CD8-positive, alpha-beta memory T cell (primary cell): ENCODE measurements at regions of chr10 and their contacts with region 1.

Region 1: GRCh38 chr10:97037365-97038361 is 148.1 kb downstream of the SLIT1 start:
- DNase-seq: peak; percentile 42 to 75 (median 50)
- H3K4me3 ChIP-seq: peak overlapping the region; percentile 68
- H3K4me3 Mint-ChIP-seq: peak overlapping the region; percentile 38 to 88 (median 77)
- H3K27ac ChIP-seq: no peak overlapping the region
- H3K27ac Mint-ChIP-seq: peak overlapping the region in 4 of 8 donors; percentile 32 to 90 (median 63)
- H3K4me1 ChIP-seq: no peaks in the 10 kb centered on the region
- H3K4me1 Mint-ChIP-seq: peaks cover 7 to 17% (median 10%) of the 10 kb centered on the region in 3 donors
- H3K27me3 ChIP-seq: no peaks in the 10 kb centered on the region
- H3K27me3 Mint-ChIP-seq: peaks cover 6 to 14% of the 10 kb centered on the region in 2 donors

Region 2: DNA sequence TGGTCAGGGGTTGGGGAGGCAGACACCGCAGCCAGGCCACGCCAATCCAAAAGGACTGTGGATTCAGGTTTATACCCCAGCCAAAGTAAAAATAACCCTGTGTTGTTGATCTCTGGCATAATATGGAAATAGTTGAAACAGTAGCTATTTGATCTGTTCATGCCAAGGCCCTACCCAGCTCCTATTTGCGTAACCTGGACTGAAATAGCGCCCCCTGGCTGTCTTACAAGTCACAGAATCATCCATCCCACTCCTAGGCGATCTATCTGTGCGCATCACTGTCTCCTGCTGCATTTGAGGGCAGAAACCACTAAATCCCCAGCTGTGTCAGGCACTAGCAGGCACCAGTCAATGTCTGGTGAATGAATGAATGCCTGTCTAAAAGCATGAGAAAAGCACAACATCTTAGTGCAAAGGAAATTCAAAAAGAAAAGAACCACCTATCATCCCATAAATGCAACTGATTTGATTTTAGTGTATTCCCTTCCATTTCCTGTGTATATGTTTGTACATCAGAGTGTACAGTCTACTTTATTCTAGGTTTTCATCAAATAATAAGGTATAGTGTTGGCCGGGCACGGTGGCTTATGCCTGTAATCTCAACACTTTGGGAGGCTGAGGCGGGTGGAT is 11.9 kb before region 1 on chr10:
- CTCF ChIA-PET with region 1: interaction called, 30 read pairs
- POLR2A ChIA-PET with region 1: no interaction called
- DNase-seq: peak; percentile 20 to 61 (median 34)
- H3K4me3 ChIP-seq: no peak overlapping the region
- H3K4me3 Mint-ChIP-seq: no peak overlapping the region
- H3K27ac ChIP-seq: no peak overlapping the region
- H3K27ac Mint-ChIP-seq: no peak overlapping the region
- H3K4me1 ChIP-seq: no peaks in the 10 kb centered on the region
- H3K4me1 Mint-ChIP-seq: peaks cover 0 to 1% (median 0%) of the 10 kb centered on the region in 3 donors
- H3K27me3 ChIP-seq: no peaks in the 10 kb centered on the region
- H3K27me3 Mint-ChIP-seq: peaks cover 3 to 4% of the 10 kb centered on the region in 2 donors

Region 3: GRCh38 chr10:97048649-97049427 is 11.2 kb after region 1 on chr10:
- CTCF ChIA-PET with region 1: interaction called, 10 read pairs
- POLR2A ChIA-PET with region 1: interaction called, 3 read pairs
- DNase-seq: no peak
- H3K4me3 ChIP-seq: no peak overlapping the region
- H3K4me3 Mint-ChIP-seq: no peak overlapping the region
- H3K27ac ChIP-seq: no peak overlapping the region
- H3K27ac Mint-ChIP-seq: peak overlapping the region in 1 of 8 donors; percentile 33
- H3K4me1 ChIP-seq: no peaks in the 10 kb centered on the region
- H3K4me1 Mint-ChIP-seq: no peaks in the 10 kb centered on the region
- H3K27me3 ChIP-seq: no peaks in the 10 kb centered on the region
- H3K27me3 Mint-ChIP-seq: peaks cover 1 to 37% of the 10 kb centered on the region in 2 donors